AG04450 (cell line): ENCODE measurements at regions of chr3 and their contacts with region 1.

Region 1: DNA sequence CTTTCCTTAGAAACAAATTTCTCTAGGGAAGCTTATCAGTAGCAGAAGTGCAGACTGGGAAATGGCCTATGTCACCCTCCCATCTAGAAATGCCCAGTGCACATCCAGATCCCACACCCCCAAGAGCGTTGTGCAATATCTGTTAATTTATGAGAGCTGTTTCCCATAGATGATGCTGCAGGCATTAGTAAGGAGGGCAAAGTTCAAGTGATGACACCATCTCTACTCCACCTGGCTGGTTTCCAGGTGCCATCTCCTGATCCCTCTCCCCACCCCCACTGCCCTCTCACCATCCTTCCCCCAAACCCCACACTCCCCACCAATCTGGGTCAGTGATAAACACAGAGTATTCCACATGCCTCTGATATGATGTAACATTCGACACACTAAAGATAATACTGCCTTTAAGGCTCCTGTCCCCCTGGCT is 39.4 kb downstream of the AGTR1 start:
- DNase-seq: no peak
- H3K4me3 ChIP-seq: no peak overlapping the region
- H3K27ac ChIP-seq: no peak overlapping the region
- H3K27me3 ChIP-seq: no peaks in the 10 kb centered on the region
- CTCF ChIP-seq: no peak

Region 2: GRCh38 chr3:148551767-148552260 is 185.3 kb before region 1 on chr3:
- CTCF ChIA-PET with region 1: no interaction called
- POLR2A ChIA-PET with region 1: no interaction called
- DNase-seq: no peak
- H3K4me3 ChIP-seq: no peak overlapping the region
- H3K27ac ChIP-seq: no peak overlapping the region
- H3K27me3 ChIP-seq: no peaks in the 10 kb centered on the region
- CTCF ChIP-seq: no peak

Region 3: GRCh38 chr3:148643389-148643840 is 93.7 kb before region 1 on chr3:
- CTCF ChIA-PET with region 1: no interaction called
- POLR2A ChIA-PET with region 1: no interaction called
- DNase-seq: peak; percentile 38
- H3K4me3 ChIP-seq: no peak overlapping the region
- H3K27ac ChIP-seq: peak overlapping the region; percentile 55
- H3K27me3 ChIP-seq: no peaks in the 10 kb centered on the region
- CTCF ChIP-seq: no peak

Region 4: DNA sequence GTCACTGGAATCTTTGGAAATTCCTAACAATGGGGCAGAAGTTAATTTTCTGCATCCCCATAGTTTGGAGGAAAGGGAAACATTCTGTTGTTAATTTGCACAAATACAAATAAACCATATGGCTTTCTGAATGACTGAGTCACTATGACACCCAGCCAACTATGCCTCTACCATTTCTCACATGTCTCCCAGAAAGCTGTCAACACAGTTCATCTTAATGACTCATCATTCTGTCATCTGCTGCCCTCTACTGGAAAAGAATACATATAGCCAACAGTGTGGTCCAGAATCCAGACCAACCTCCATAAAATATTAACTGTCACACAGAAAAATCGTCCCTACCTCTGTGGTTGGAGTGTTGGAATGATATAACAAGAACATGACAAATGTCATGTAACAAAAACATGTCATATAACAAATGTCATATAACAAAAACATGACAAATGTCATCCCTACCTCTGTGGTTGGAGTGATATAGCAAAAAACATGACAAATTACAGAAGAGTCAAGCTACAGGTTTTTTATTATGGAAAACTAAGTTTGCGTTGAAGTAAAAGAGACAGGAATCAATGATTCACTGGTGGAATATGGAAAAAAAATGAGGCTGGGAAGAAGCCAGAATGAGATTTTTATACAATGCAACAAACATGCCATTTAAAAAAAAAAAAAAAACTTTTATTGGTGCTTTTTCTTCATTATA is 206.5 kb after region 1 on chr3:
- CTCF ChIA-PET with region 1: interaction called, 10 read pairs
- POLR2A ChIA-PET with region 1: no interaction called
- DNase-seq: peak; percentile 41
- H3K4me3 ChIP-seq: no peak overlapping the region
- H3K27ac ChIP-seq: no peak overlapping the region
- H3K27me3 ChIP-seq: no peaks in the 10 kb centered on the region
- CTCF ChIP-seq: peak; percentile 78